ENCODE measurements at regions of chr2 and their contacts with region 1.

Region 1: GRCh38 chr2:215435809-215436704 is at the start of gene FN1:
- DNase-seq: peak; percentile 98
- H3K4me3 ChIP-seq: peak within 1 kb of the TSS; percentile 87 to 97 (median 90)
- H3K27ac ChIP-seq: peak within 1 kb of the TSS; percentile 95 to 99 (median 98)
- H3K4me1 ChIP-seq: peaks cover 0 to 42% (median 21%) of the 10 kb centered on the region in 4 donors
- H3K27me3 ChIP-seq: no peaks in the 10 kb centered on the region
- CTCF ChIP-seq: no peak
- EP300 ChIP-seq: peak in 2 of 4 donors; percentile 42 to 58
- POLR2A ChIP-seq: peak; percentile 79 to 85
- total RNA-seq, gene FN1: 671 to 3,059 (median 1,333) TPM

Region 2: GRCh38 chr2:215191477-215191876 is 244.6 kb before region 1 on chr2:
- intact Hi-C with region 1: no loop called
- DNase-seq: no peak
- H3K4me3 ChIP-seq: no peak overlapping the region
- H3K27ac ChIP-seq: no peak overlapping the region
- H3K4me1 ChIP-seq: no peaks in the 10 kb centered on the region
- H3K27me3 ChIP-seq: no peaks in the 10 kb centered on the region
- CTCF ChIP-seq: no peak
- EP300 ChIP-seq: no peak
- POLR2A ChIP-seq: no peak

Region 3: GRCh38 chr2:215269397-215270119 is 166.5 kb before region 1 on chr2:
- intact Hi-C with region 1: no loop called
- DNase-seq: no peak
- H3K4me3 ChIP-seq: peak overlapping the region in 1 of 4 donors; percentile 8
- H3K27ac ChIP-seq: no peak overlapping the region
- H3K4me1 ChIP-seq: no peaks in the 10 kb centered on the region
- H3K27me3 ChIP-seq: no peaks in the 10 kb centered on the region
- CTCF ChIP-seq: peak; percentile 37 to 72 (median 44)
- EP300 ChIP-seq: no peak
- POLR2A ChIP-seq: no peak

Region 4: GRCh38 chr2:215466097-215466909 is 30.2 kb after region 1 on chr2:
- intact Hi-C with region 1: no loop called
- DNase-seq: no peak
- H3K4me3 ChIP-seq: no peak overlapping the region
- H3K27ac ChIP-seq: peak overlapping the region in 1 of 4 donors; percentile 41
- H3K4me1 ChIP-seq: peaks cover 0 to 5% (median under 1%) of the 10 kb centered on the region in 4 donors
- H3K27me3 ChIP-seq: no peaks in the 10 kb centered on the region
- CTCF ChIP-seq: no peak
- EP300 ChIP-seq: no peak
- POLR2A ChIP-seq: no peak

Region 5: GRCh38 chr2:215664847-215665525 is 228.9 kb after region 1 on chr2:
- intact Hi-C with region 1: loop called (anchors 5 kb)
- DNase-seq: no peak
- H3K4me3 ChIP-seq: no peak overlapping the region
- H3K27ac ChIP-seq: peak overlapping the region; percentile 45 to 80 (median 68)
- H3K4me1 ChIP-seq: peaks cover 0 to 71% (median 43%) of the 10 kb centered on the region in 4 donors
- H3K27me3 ChIP-seq: no peaks in the 10 kb centered on the region
- CTCF ChIP-seq: no peak
- EP300 ChIP-seq: no peak
- POLR2A ChIP-seq: no peak

Region 6: DNA sequence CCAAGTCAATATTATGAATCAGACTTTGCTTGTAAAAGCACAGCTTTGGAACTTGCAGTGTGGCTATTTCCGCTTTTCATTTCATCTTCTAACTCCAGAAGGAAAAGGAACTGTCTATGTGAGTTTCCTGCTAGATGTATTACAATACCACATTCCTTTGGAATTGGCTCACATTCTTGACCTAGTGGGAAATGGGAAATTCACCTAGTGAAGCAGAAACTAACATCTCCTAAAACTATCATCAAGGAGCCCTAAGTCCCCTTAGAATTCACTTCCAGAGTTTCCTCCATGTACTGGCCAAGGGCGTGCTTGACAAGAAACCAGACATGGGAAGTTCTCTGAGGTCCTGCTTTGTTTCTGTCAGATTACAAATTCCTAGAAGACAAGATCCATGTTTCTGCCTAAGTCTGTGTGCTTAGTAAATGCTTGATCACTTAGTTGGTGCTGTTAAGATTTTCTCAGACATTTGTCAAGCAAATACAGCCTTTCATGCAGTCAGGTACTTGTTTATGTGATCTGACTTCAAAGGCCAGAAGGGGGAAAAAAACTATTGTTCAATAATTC is 275.5 kb after region 1 on chr2:
- intact Hi-C with region 1: loop called (anchors 5 kb)
- DNase-seq: no peak
- H3K4me3 ChIP-seq: no peak overlapping the region
- H3K27ac ChIP-seq: peak overlapping the region; percentile 66 to 81 (median 76)
- H3K4me1 ChIP-seq: peaks cover 0 to 41% (median 35%) of the 10 kb centered on the region in 4 donors
- H3K27me3 ChIP-seq: no peaks in the 10 kb centered on the region
- CTCF ChIP-seq: no peak
- EP300 ChIP-seq: no peak
- POLR2A ChIP-seq: no peak

Region 7: DNA sequence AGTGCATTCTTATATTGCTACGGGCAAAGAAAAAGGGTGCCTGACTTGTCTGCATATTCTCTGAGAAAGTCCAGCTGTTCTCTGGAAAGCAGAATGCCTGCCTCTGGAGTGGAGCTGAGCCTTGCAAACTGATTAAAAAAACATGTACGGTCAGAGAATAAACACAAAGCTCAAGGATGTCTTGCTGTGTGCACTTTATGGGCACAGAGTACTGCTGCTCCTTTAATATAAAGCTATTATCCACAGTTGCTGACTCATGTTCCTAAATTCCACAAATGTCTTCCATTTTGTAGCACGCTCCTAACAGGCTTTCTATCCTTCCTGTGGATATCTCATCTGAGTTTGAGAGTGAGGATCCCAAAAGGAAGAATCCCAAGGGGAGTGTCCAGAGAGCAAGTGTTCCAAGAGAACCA is 348.3 kb after region 1 on chr2:
- intact Hi-C with region 1: loop called (anchors 5 kb)
- DNase-seq: peak; percentile 79
- H3K4me3 ChIP-seq: no peak overlapping the region
- H3K27ac ChIP-seq: peak overlapping the region; percentile 58 to 85 (median 78)
- H3K4me1 ChIP-seq: peaks cover 0 to 59% (median 31%) of the 10 kb centered on the region in 4 donors
- H3K27me3 ChIP-seq: no peaks in the 10 kb centered on the region
- CTCF ChIP-seq: no peak
- EP300 ChIP-seq: peak in 3 of 4 donors; percentile 62 to 86 (median 67)
- POLR2A ChIP-seq: no peak

Measured in sigmoid colon (tissue), 7 donors.